ENCODE measurements at regions of chr17 and their contacts with region 1.

Region 1: DNA sequence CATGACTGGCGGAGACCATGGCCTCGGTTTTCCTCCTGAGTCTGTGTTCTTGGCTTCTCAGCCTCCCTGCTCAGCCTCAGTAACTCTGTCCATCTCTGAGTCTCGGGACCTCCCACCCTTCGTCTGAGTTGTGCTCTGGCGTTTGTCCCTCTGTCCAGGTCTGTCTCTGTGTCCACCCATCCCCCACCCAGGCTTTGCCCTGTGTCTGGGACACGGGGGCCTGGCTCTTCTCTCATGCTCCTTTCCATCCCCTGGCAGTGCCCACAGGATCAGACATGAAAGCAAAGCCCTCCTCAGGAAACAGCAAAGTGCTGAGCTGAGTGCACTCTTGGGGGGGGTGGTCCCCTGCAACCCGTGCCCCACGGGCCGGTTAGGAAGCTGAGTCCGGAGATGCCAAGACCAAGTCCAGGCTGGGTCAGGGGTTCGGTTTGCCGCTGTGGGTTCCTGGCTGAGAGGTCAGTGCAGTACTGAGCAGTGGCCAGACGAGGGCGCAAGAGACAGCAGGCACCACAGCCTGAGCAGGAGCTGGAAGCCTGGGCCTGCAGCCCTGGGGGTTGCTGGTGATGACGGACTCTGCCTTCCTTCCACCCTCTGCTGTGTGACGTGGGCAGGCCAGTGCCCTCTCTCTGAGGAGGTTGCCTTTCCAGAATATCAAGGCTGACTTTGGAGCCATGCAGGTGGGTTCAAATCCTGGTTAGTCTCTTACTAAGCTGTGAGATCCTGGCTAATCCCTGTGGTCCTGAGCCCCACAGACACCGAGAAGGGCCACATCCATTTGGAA is 2.5 kb downstream of the P2RX1 start:
- DNase-seq: peak; percentile 70 to 81 (median 74)
- H3K4me3 ChIP-seq: no peak overlapping the region
- H3K4me3 Mint-ChIP-seq: peak overlapping the region in 3 of 8 donors; percentile 10 to 40 (median 29)
- H3K27ac ChIP-seq: no peak overlapping the region
- H3K27ac Mint-ChIP-seq: peak overlapping the region; percentile 64 to 88 (median 77)
- H3K4me1 ChIP-seq: peaks cover 46% of the 10 kb centered on the region
- H3K4me1 Mint-ChIP-seq: peaks cover 15 to 62% (median 39%) of the 10 kb centered on the region in 4 donors
- H3K27me3 ChIP-seq: no peaks in the 10 kb centered on the region
- H3K27me3 Mint-ChIP-seq: no peaks in the 10 kb centered on the region

Region 2: GRCh38 chr17:3865176-3865575 is 48.5 kb before region 1 on chr17:
- CTCF ChIA-PET with region 1: interaction called, 14 read pairs
- POLR2A ChIA-PET with region 1: no interaction called
- intact Hi-C with region 1: loop called (anchors 5 kb)
- DNase-seq: no peak
- H3K4me3 ChIP-seq: no peak overlapping the region
- H3K4me3 Mint-ChIP-seq: no peak overlapping the region
- H3K27ac ChIP-seq: no peak overlapping the region
- H3K27ac Mint-ChIP-seq: no peak overlapping the region
- H3K4me1 ChIP-seq: no peaks in the 10 kb centered on the region
- H3K4me1 Mint-ChIP-seq: no peaks in the 10 kb centered on the region
- H3K27me3 ChIP-seq: no peaks in the 10 kb centered on the region
- H3K27me3 Mint-ChIP-seq: no peaks in the 10 kb centered on the region

Region 3: DNA sequence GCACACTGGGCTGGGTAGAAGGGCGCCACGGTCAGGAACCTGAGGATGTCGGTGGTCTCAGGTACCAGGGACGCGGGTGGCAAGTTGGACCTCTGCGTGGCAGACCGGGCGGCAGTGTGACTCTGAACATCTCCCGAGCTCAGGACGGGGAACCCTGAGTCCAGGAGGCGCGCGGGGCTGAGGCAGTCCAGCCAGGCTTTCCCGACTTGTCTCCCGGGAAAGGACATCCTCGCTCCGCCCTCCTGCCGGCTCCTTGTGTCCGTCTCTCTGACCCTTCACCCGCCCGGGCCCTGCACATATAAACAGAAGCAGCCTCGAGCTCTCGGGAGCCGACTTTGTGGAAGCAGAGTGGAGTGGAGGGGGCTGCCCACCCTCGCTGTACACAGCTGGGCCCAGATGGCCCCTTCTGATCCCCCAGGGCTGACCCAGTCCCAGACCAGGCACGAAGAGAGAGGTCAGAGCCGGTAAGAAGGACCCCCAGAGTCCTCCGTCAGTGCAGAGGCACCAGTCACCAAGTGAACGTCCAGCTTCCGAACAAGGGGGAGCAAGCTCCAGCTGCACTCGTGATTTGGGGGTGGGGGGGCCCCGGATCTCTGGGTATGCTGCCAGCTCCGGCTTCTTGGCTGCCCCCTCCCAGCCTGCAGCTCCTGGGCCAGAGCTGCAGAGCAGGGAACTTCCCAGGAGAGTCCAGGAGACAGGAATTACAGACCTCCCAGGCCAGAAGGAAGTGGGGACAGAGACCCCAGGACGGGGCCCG is 11.0 kb after region 1 on chr17:
- CTCF ChIA-PET with region 1: interaction called, 15 read pairs
- POLR2A ChIA-PET with region 1: no interaction called
- intact Hi-C with region 1: no loop called
- DNase-seq: peak in 1 of 5 donors; percentile 28
- H3K4me3 ChIP-seq: no peak overlapping the region
- H3K4me3 Mint-ChIP-seq: no peak overlapping the region
- H3K27ac ChIP-seq: no peak overlapping the region
- H3K27ac Mint-ChIP-seq: peak overlapping the region in 2 of 7 donors; percentile 18 to 78
- H3K4me1 ChIP-seq: no peaks in the 10 kb centered on the region
- H3K4me1 Mint-ChIP-seq: peaks cover 0 to 4% (median 0%) of the 10 kb centered on the region in 4 donors
- H3K27me3 ChIP-seq: no peaks in the 10 kb centered on the region
- H3K27me3 Mint-ChIP-seq: no peaks in the 10 kb centered on the region

Region 4: DNA sequence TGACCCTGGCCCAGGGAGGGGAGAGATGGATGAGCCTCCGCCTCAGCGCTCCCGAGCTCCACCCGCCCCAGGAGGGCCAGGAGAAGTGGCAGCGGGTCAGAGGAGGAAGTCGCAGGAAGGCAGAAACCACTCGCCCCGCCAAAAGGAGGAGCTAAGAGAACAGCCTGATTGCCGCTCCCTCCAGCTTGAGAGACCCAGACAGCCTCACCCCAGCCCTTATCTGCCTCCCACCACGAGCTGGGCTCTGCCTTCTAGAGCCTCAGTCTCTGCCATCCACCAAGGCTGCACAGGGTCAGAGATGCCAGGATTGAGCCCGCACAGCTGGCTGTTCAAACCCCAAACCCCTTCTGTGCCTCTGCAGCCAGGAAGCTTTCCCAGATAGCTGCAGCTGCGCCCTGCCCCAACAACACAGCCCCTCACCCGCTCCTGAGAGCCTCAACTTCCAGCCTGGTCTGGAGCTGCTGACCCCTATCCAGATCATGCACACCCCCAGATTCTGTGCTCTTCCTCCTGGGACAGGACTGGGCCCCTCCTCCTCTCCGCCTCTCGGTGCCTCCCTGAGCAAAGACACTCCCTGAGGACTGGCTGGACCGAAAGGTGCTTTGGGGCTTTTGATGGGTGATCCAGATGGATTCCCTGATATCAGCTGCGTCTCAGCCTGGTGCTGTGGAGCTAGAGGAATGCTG is 51.5 kb after region 1 on chr17:
- CTCF ChIA-PET with region 1: interaction called, 23 read pairs
- POLR2A ChIA-PET with region 1: interaction called, 22 read pairs
- intact Hi-C with region 1: loop called (anchors 2 kb)
- DNase-seq: peak; percentile 58 to 82 (median 65)
- H3K4me3 ChIP-seq: peak overlapping the region; percentile 76 to 80
- H3K4me3 Mint-ChIP-seq: peak overlapping the region; percentile 90 to 94 (median 93)
- H3K27ac ChIP-seq: peak overlapping the region; percentile 77
- H3K27ac Mint-ChIP-seq: peak overlapping the region; percentile 87 to 98 (median 96)
- H3K4me1 ChIP-seq: peaks cover 37% of the 10 kb centered on the region
- H3K4me1 Mint-ChIP-seq: peaks cover 26 to 43% (median 35%) of the 10 kb centered on the region in 4 donors
- H3K27me3 ChIP-seq: no peaks in the 10 kb centered on the region
- H3K27me3 Mint-ChIP-seq: no peaks in the 10 kb centered on the region

Region 5: GRCh38 chr17:3993493-3994220 is 79.9 kb after region 1 on chr17:
- CTCF ChIA-PET with region 1: interaction called, 11 read pairs
- POLR2A ChIA-PET with region 1: interaction called, 4 read pairs
- intact Hi-C with region 1: no loop called
- DNase-seq: no peak
- H3K4me3 ChIP-seq: no peak overlapping the region
- H3K4me3 Mint-ChIP-seq: no peak overlapping the region
- H3K27ac ChIP-seq: no peak overlapping the region
- H3K27ac Mint-ChIP-seq: no peak overlapping the region
- H3K4me1 ChIP-seq: no peaks in the 10 kb centered on the region
- H3K4me1 Mint-ChIP-seq: peaks cover 0 to 2% (median 0%) of the 10 kb centered on the region in 4 donors
- H3K27me3 ChIP-seq: no peaks in the 10 kb centered on the region
- H3K27me3 Mint-ChIP-seq: peaks cover 4 to 11% of the 10 kb centered on the region in 2 donors

Region 6: GRCh38 chr17:4074831-4075495 is 161.2 kb after region 1 on chr17:
- CTCF ChIA-PET with region 1: interaction called, 32 read pairs
- POLR2A ChIA-PET with region 1: no interaction called
- intact Hi-C with region 1: loop called (anchors 10 kb)
- DNase-seq: peak in 4 of 5 donors; percentile 45 to 53 (median 48)
- H3K4me3 ChIP-seq: no peak overlapping the region
- H3K4me3 Mint-ChIP-seq: no peak overlapping the region
- H3K27ac ChIP-seq: no peak overlapping the region
- H3K27ac Mint-ChIP-seq: peak overlapping the region in 4 of 7 donors; percentile 27 to 82 (median 50)
- H3K4me1 ChIP-seq: no peaks in the 10 kb centered on the region
- H3K4me1 Mint-ChIP-seq: peaks cover 0 to 6% (median 3%) of the 10 kb centered on the region in 4 donors
- H3K27me3 ChIP-seq: no peaks in the 10 kb centered on the region
- H3K27me3 Mint-ChIP-seq: no peaks in the 10 kb centered on the region

Region 7: DNA sequence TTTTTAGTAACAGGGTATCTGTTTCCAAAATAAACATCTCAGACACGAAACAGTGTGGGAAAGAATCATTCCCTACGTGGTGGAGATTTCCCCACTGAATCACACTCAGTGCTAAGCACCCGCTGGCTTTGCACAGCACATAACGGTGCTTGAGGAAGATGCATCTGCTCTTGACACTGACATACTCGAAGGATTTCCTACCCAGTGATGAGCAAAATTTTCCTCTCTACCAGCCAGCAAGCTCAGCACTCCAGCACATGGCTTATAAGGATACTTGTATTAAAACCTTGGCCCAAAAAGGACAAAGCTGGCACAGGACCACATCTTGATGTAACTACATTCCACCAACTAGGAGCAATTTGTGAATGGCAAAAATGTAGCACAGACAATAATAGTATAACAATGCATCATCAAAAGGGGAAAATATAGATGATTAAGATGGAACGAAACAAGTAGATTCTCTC is 291.0 kb after region 1 on chr17:
- CTCF ChIA-PET with region 1: no interaction called
- POLR2A ChIA-PET with region 1: no interaction called
- intact Hi-C with region 1: no loop called
- DNase-seq: no peak
- H3K4me3 ChIP-seq: no peak overlapping the region
- H3K4me3 Mint-ChIP-seq: no peak overlapping the region
- H3K27ac ChIP-seq: no peak overlapping the region
- H3K27ac Mint-ChIP-seq: peak overlapping the region in 5 of 7 donors; percentile 24 to 86 (median 35)
- H3K4me1 ChIP-seq: peaks cover 8% of the 10 kb centered on the region
- H3K4me1 Mint-ChIP-seq: peaks cover 9 to 21% (median 14%) of the 10 kb centered on the region in 4 donors
- H3K27me3 ChIP-seq: no peaks in the 10 kb centered on the region
- H3K27me3 Mint-ChIP-seq: no peaks in the 10 kb centered on the region

Measured in CD4-positive, alpha-beta memory T cell (primary cell).